Heart left ventricle (tissue), 16 donors: ENCODE measurements at regions of chr6 and their contacts with region 1.

Region 1: GRCh38 chr6:55293116-55293515 is 34.2 kb upstream of the GFRAL start:
- DNase-seq: no peak
- ATAC-seq: no peak
- H3K4me3 ChIP-seq: no peak overlapping the region
- H3K27ac ChIP-seq: no peak overlapping the region
- H3K4me1 ChIP-seq: no peaks in the 10 kb centered on the region
- H3K27me3 ChIP-seq: no peaks in the 10 kb centered on the region
- CTCF ChIP-seq: peak in 3 of 12 donors; percentile 9 to 34 (median 13)
- POLR2A ChIP-seq: no peak

Region 2: DNA sequence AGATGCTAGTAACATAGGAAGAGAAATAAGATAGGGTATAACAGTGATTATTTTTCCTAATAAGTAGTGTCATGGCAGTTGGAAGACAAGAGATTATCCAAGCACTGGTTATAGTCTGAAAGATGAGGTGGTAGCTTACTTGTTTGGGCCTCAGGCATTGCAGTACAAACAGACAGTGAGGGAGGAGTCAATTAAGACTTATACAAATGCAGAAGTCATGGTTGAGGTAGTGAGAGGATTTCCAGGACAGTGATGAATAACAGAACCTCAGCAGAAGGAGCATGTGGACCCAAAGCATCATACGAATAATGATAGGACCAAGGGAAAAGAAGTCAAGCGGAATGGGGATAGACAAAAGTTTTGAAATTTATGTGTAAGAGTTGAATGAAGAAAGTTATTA is 65.3 kb before region 1 on chr6:
- intact Hi-C with region 1: no loop called
- DNase-seq: no peak
- ATAC-seq: no peak
- H3K4me3 ChIP-seq: no peak overlapping the region
- H3K27ac ChIP-seq: no peak overlapping the region
- H3K4me1 ChIP-seq: no peaks in the 10 kb centered on the region
- H3K27me3 ChIP-seq: no peaks in the 10 kb centered on the region
- CTCF ChIP-seq: no peak
- POLR2A ChIP-seq: no peak

Region 3: DNA sequence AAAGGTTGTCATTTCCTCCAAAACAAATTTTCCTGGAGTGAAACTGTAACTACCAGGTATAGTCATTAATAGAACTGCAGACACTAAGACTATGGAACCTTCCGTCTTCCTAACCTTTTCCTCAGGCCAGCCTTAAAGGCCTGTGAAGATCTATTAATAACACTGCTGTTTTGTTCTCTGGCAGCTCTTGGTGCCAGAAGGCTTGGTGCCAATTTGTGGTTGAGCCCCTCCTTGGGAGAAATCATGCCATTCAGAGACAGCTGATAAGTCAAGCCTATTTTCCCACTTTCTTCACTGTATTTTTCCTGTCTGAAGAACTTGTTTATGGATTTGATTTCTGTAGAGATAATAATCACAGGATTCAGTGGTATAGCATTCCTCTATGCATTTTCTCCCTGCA is 54.0 kb before region 1 on chr6:
- intact Hi-C with region 1: no loop called
- DNase-seq: peak in 1 of 5 donors; percentile 26
- ATAC-seq: peak in 2 of 4 donors; percentile 42 to 52
- H3K4me3 ChIP-seq: no peak overlapping the region
- H3K27ac ChIP-seq: no peak overlapping the region
- H3K4me1 ChIP-seq: no peaks in the 10 kb centered on the region
- H3K27me3 ChIP-seq: no peaks in the 10 kb centered on the region
- CTCF ChIP-seq: no peak
- POLR2A ChIP-seq: no peak

Region 4: DNA sequence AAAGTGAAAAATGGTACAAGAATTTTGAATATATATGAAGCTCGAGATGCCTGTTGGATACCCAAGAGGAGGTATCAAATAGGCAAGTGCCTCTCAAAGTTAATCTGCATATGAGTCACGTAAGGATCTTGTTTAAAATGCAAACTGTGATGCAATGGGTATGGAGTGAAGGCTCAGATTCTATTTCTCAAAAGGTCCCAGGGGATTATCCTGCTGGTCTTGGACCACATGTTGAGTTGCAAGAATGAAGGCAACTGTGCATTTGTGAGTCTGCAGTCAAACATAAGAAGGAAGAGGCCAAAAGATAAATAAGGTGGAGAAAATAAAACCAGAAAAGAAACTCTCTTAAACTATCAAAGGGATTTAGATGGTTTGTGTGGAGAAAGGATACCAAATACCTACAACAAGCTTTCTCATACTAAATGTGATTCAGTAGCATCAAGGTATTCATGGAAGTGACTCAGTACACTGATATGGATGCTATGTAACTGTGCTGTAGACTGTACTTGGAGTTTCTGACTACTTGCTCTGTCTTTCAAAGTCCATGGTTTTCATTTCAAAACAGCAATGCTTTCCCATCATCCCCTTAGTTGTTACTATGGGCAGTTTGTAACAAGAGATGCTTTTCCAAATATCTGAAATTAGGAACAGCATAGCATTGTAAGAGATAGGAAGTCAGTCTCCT is 140.5 kb after region 1 on chr6:
- intact Hi-C with region 1: loop called in 1 of 10 experiments (anchors 10 kb)
- DNase-seq: no peak
- ATAC-seq: no peak
- H3K4me3 ChIP-seq: no peak overlapping the region
- H3K27ac ChIP-seq: no peak overlapping the region
- H3K4me1 ChIP-seq: no peaks in the 10 kb centered on the region
- H3K27me3 ChIP-seq: no peaks in the 10 kb centered on the region
- CTCF ChIP-seq: no peak
- POLR2A ChIP-seq: no peak

Region 5: GRCh38 chr6:56388395-56388755 is 1095.3 kb after region 1 on chr6:
- intact Hi-C with region 1: no loop called
- DNase-seq: no peak
- ATAC-seq: peak; percentile 68 to 84 (median 70)
- H3K4me3 ChIP-seq: no peak overlapping the region
- H3K27ac ChIP-seq: no peak overlapping the region
- H3K4me1 ChIP-seq: peaks cover 0 to 37% (median 10%) of the 10 kb centered on the region in 12 donors
- H3K27me3 ChIP-seq: no peaks in the 10 kb centered on the region
- CTCF ChIP-seq: peak in 1 of 12 donors; percentile 32
- POLR2A ChIP-seq: no peak